HepG2 (cell line): ENCODE measurements at regions of chr7 and their contacts with region 1.

Region 1: DNA sequence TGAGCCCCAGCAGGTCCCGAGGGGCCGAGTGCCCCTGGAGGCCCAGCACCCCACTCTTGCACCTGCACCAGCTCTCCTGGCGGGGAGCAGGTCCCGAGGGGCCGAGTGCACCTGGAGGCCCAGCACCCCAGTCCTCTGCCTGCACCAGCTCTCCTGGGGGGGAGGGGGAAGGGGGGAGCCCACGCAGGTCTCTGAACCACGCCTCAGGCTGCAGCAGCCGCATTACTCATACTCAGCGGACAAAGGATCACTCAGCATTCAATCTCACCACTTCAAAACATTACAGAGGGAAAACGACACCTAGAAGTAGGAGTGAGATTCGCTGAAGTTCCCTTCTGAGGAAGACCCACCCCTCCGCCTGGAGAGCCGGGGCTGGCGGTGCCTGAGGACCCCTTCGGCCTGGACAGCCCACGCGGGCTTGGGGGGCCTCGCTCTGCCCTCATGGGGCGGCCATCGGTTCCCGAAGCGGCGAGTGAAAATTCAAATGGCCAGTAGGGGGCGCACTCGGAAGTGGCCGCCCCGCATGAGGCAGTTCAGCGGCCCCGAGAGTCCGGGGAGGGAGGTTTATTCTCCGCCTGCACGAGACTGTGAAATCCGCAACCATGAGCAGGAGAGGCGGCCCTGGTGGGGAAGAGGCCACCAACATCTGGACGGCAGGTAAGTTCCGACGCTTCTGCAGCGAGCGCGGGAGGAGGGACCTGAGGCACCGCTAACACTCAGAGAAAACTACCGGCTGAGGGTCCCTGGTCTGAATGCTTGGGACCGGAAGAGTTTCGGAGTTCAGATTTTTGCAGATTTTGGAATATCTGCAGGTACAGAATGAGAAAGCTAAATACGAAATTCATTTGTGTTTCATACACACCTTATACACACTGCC is 1.1 kb upstream of the GPER1 start:
- DNase-seq: peak; percentile 68
- ATAC-seq: peak; percentile 72
- H3K4me3 ChIP-seq: peak overlapping the region; percentile 66 to 79 (median 77)
- H3K27ac ChIP-seq: peak overlapping the region; percentile 74
- H3K4me1 ChIP-seq: peaks cover 50% of the 10 kb centered on the region
- H3K27me3 ChIP-seq: no peaks in the 10 kb centered on the region
- CTCF ChIP-seq: peak; percentile 95
- EP300 ChIP-seq: no peak
- POLR2A ChIP-seq: peak in 1 of 2 experiments; percentile 57; a peak in 2 of 4 replicates
- RAD21 ChIP-seq: peak; percentile 85

Region 2: DNA sequence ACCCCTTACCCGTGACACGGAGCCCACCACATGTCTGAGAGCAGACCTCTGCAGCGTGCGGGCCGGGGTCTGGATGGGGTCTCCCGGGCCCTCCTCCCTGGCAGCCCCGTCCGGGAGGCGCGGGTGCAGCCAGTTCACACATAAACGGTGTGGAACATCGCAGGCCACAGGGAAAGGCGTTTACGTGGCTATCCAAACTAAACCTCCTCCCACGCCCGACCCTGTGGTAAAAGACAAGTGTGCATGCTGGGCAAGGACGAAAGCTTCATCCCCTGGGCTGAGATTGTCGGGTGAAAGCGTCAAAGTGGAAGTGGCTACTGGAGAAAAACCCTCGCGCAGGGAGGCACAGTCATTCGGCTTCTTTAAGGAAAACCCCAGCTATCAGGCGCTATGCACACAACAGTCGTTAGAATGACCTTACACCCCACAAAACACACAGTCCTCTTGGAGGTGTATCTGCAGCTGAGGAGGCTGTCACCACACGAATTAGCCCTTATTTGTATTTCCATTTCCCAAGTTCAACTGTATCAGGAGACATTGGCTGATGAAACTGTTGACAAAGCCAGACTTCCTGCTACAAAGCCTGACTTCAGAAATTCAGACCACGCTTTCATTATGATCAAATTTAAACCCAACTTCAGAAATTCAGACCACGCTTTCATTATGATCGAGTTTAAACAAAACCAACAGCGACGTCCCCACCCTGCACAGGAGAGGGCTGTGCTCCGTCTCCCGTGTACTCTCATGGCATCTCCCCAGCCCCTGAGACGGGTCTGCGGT is 16.4 kb after region 1 on chr7:
- CTCF ChIA-PET with region 1: no interaction called
- POLR2A ChIA-PET with region 1: interaction called, 59 read pairs
- in situ Hi-C with region 1: no loop called
- intact Hi-C with region 1: no loop called
- DNase-seq: peak; percentile 41
- ATAC-seq: peak; percentile 22; the same call in 2 of the 3 replicates
- H3K4me3 ChIP-seq: no peak overlapping the region
- H3K27ac ChIP-seq: no peak overlapping the region
- H3K4me1 ChIP-seq: peaks cover 34% of the 10 kb centered on the region
- H3K27me3 ChIP-seq: no peaks in the 10 kb centered on the region
- CTCF ChIP-seq: no peak
- EP300 ChIP-seq: no peak
- POLR2A ChIP-seq: no peak
- RAD21 ChIP-seq: no peak

Region 3: GRCh38 chr7:1123715-1124114 is 36.9 kb after region 1 on chr7:
- CTCF ChIA-PET with region 1: interaction called, 10 read pairs
- POLR2A ChIA-PET with region 1: interaction called, 3 read pairs
- in situ Hi-C with region 1: no loop called
- intact Hi-C with region 1: loop called (anchors 1 kb)
- DNase-seq: peak; percentile 21
- ATAC-seq: peak; percentile 86
- H3K4me3 ChIP-seq: no peak overlapping the region
- H3K27ac ChIP-seq: no peak overlapping the region
- H3K4me1 ChIP-seq: no peaks in the 10 kb centered on the region
- H3K27me3 ChIP-seq: no peaks in the 10 kb centered on the region
- CTCF ChIP-seq: peak; percentile 71
- EP300 ChIP-seq: no peak
- POLR2A ChIP-seq: no peak
- RAD21 ChIP-seq: peak; percentile 67

Region 4: GRCh38 chr7:1137510-1138167 is 50.8 kb after region 1 on chr7:
- CTCF ChIA-PET with region 1: no interaction called
- POLR2A ChIA-PET with region 1: interaction called, 3 read pairs
- in situ Hi-C with region 1: no loop called
- intact Hi-C with region 1: loop called (anchors 1 kb)
- DNase-seq: no peak
- ATAC-seq: peak; percentile 84
- H3K4me3 ChIP-seq: peak overlapping the region; percentile 83 to 97 (median 96)
- H3K27ac ChIP-seq: peak overlapping the region; percentile 46
- H3K4me1 ChIP-seq: peaks cover 13% of the 10 kb centered on the region; the same call in 1 of the 2 replicates
- H3K27me3 ChIP-seq: no peaks in the 10 kb centered on the region
- CTCF ChIP-seq: no peak
- EP300 ChIP-seq: no peak
- POLR2A ChIP-seq: no peak
- RAD21 ChIP-seq: no peak

Region 5: DNA sequence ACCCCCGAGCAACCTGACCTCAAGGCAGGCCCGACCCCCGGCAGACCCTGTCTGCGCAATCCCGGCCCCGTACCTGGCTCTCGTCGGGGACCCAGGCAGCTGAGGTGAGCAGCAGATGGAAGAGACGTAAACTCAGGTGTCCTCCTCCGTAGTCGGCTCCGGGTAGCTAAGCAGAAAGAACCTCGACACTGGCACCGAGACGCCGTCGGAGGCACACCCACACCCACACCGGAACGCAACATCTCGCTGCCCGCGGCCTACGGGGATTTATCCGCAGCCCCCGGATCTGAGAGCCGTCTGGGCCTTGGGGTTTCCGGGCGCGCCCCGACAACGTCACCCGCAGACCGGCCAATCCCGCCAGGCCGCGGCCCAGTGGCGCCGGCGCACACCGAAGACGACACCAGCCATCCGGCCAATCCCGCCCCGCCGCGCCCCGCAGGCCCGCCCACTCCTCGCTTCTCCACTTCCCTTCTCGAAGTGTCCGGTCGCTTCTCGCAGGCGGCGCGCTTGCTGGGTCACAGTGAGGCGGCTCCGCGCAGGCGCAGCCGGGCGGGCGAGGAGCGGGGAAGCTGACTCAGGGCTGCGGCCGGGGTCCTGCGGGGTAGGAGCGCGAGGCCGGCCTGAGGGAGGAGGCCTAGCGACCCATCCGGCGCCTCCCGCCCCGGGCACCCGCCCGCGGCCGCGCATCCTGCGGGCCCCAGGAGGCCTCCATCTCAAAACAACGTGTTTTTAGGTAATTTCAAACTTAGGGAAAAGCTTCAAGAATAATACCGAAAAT is 73.3 kb after region 1 on chr7 and contains the start of gene ZFAND2A:
- CTCF ChIA-PET with region 1: no interaction called
- POLR2A ChIA-PET with region 1: interaction called, 24 read pairs
- in situ Hi-C with region 1: loop called (anchors 5 kb)
- intact Hi-C with region 1: no loop called
- DNase-seq: peak; percentile 92
- ATAC-seq: peak; percentile 71
- H3K4me3 ChIP-seq: peak within 1 kb of the TSS; percentile 73 to 100 (median 97)
- H3K27ac ChIP-seq: peak within 1 kb of the TSS; percentile 92
- H3K4me1 ChIP-seq: peaks cover 44% of the 10 kb centered on the region
- H3K27me3 ChIP-seq: no peaks in the 10 kb centered on the region; a peak in 1 of 5 replicates
- CTCF ChIP-seq: no peak
- EP300 ChIP-seq: peak in 1 of 2 experiments; percentile 12; a peak in 1 of 4 replicates
- POLR2A ChIP-seq: peak; percentile 66 to 75
- RAD21 ChIP-seq: no peak; the same call in 1 of the 2 replicates
- total RNA-seq, gene ZFAND2A: 140 and 171 TPM in 2 replicates

Region 6: DNA sequence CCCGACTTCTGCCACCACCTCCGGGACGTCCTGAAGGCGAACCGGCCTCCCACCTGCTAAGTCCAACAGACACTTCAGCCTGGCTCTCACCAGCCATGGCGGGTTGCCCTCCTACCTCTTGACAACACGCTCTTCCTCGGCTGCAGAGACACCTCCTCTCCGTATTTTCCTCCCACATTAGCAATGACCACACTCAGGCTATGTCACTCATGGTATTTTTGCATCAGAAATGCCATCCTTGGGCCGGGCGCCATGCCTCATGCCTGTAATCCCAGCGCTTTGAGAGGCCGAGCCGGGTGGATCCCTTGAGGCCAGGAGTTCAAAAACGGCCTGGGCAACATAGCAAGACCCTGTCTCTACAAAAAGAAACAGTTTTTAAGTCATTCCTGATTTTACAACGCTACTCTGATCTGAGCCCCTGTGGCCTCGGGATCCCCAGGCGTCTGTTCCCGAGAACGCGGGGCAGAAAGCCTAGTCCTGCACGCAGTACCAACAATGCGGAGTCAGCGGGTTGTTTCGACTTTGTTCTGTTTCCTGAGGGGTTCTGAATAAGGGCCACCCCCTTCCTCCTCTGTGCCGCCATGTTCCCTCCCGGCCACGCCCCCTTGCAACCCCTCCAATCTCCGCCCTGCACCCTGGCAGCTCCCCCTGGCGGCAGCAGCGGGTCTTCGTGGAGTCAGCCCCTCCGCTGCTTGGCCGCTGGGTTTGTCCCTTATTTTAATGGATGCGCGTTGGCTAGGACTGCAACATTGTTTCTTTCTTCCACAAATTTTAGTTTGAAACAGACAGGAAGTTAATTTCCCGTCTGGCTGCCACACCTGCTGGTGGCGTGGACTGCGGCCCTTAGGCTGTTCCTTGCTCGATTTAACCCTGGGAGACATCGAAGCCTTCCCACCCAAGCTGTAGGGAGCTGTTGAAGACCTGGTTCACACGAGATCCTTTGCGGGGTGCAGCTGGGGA is 82.9 kb after region 1 on chr7:
- CTCF ChIA-PET with region 1: interaction called, 11 read pairs
- POLR2A ChIA-PET with region 1: interaction called, 13 read pairs
- in situ Hi-C with region 1: loop called (anchors 5 kb)
- intact Hi-C with region 1: no loop called
- DNase-seq: peak; percentile 83
- ATAC-seq: peak; percentile 93
- H3K4me3 ChIP-seq: peak overlapping the region; percentile 81 to 94 (median 94)
- H3K27ac ChIP-seq: peak overlapping the region; percentile 95
- H3K4me1 ChIP-seq: peaks cover 35% of the 10 kb centered on the region
- H3K27me3 ChIP-seq: no peaks in the 10 kb centered on the region; a peak in 1 of 5 replicates
- CTCF ChIP-seq: peak; percentile 98
- EP300 ChIP-seq: peak in 1 of 2 experiments; percentile 42; a peak in 1 of 4 replicates
- POLR2A ChIP-seq: peak; percentile 80 to 84
- RAD21 ChIP-seq: peak; percentile 80

Region 7: DNA sequence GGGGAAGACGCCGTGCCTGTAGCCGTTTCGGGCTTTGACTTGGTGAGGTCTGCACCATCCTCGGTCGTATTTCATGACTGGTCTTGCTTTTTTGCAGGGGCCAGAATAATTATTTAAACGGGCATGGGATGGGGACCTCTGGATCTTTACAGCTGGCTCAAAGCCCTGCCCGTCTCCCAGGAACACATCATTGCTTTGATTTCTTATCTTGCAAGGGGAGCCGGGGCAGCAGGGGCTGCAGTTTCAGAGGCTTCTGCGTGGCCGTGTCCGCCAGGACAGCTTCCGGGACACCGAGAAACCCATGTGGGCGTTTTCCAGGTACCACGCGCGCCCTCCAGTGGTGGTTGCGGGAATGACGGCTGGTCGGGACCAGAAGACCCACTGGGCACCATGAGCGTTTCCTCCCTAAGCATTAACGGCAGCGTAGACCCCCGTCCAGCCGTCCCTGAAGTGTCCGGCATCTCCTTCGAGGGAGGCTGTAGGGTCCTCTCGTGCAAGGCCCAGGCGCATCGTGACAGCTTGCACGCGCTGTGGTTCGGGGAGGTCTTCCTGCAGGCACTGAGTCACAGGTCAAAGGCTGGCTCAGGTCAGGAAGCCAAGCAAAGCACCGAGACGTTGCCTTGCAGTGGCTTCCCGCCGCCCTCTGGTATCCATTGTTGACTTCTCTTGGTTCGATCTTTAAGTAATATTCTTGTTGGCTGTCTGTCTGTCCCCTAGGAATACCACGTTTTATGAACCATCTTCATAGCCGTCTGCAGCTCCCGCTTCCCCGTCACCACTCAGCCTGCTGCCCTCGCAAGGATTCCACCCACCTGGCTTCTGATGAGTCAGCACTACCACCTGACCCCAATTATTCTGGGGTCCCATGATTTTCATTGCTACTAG is 89.4 kb after region 1 on chr7:
- CTCF ChIA-PET with region 1: interaction called, 9 read pairs
- POLR2A ChIA-PET with region 1: interaction called, 4 read pairs
- in situ Hi-C with region 1: no loop called
- intact Hi-C with region 1: loop called (anchors 5 kb)
- DNase-seq: peak; percentile 70
- ATAC-seq: peak; percentile 83
- H3K4me3 ChIP-seq: peak overlapping the region; percentile 27 to 65 (median 37); a peak in 5 of 6 replicates
- H3K27ac ChIP-seq: peak overlapping the region; percentile 57
- H3K4me1 ChIP-seq: peaks cover 26% of the 10 kb centered on the region
- H3K27me3 ChIP-seq: peaks cover 3 to 9% of the 10 kb centered on the region in 2 experiments; a peak in 2 of 5 replicates
- CTCF ChIP-seq: peak; percentile 98
- EP300 ChIP-seq: no peak
- POLR2A ChIP-seq: peak in 1 of 2 experiments; percentile 53; a peak in 2 of 4 replicates
- RAD21 ChIP-seq: peak; percentile 83